ENCODE measurements at regions of chr4 and their contacts with region 1.

Region 1: GRCh38 chr4:119559044-119559647 is 69.5 kb downstream of the PDE5A start:
- DNase-seq: no peak
- H3K4me3 ChIP-seq: no peak overlapping the region
- CTCF ChIP-seq: no peak

Region 2: DNA sequence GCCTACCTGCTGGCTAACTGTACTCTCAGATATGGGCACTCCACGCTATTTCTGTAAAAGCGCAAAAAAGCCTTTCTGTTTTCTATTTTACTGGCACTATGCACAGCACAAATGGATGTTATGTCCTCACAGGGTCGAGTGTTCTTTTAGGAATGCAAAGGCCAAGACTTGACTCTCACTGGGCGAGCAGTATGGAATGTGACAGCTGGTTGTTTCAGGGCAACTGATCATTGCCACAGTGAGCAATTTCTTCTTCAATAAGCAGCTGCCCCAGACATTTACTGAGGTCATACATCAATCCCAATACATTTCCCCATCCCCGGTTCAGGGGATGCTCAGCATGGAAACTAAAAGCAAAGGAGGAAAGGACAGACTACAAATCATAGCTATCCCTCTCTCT is 11.3 kb after region 1 on chr4:
- CTCF ChIA-PET with region 1: interaction called, 13 read pairs
- POLR2A ChIA-PET with region 1: no interaction called
- DNase-seq: peak; percentile 5
- H3K4me3 ChIP-seq: no peak overlapping the region
- CTCF ChIP-seq: no peak

Region 3: GRCh38 chr4:119785963-119786362 is 226.8 kb after region 1 on chr4:
- CTCF ChIA-PET with region 1: interaction called, 10 read pairs
- POLR2A ChIA-PET with region 1: no interaction called
- DNase-seq: no peak
- H3K4me3 ChIP-seq: no peak overlapping the region
- CTCF ChIP-seq: peak; percentile 16

Region 4: DNA sequence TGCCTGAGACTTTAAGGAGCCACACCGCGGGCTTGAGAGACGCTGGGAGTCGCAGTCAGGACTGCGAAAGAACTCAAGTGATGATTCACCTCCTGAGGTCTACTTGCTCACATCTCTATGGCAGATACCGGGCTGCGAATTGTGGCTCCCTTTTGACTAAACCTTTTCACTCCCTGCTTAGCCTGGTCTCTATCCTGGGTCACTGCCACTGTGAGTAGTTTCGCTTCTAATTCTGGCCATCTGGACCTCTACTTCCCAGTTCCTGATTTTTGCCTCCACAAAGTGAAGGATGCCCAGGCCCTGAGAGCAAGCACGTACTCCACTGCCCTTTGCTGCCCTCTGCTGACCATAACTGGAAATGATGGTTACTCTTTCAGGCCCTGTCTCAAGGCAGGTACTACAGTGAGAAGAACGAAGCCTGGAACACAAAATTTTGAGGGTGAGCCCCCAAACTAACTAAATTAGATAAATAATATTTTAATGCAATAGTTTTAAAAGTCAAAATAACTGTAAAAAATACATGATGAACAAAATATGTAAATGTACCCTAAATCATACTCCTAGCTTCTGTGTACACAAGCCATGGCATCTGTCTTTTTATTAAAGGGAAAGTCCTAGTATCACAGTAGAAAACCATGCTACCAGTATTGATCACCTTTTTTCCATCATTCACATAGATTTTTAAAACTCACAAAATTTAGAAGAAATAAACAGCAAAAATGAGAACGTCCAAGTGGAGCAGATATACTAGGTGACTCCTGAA is 490.8 kb after region 1 on chr4:
- CTCF ChIA-PET with region 1: interaction called, 98 read pairs
- POLR2A ChIA-PET with region 1: no interaction called
- DNase-seq: no peak
- H3K4me3 ChIP-seq: peak overlapping the region; percentile 52
- CTCF ChIP-seq: peak; percentile 86

Region 5: DNA sequence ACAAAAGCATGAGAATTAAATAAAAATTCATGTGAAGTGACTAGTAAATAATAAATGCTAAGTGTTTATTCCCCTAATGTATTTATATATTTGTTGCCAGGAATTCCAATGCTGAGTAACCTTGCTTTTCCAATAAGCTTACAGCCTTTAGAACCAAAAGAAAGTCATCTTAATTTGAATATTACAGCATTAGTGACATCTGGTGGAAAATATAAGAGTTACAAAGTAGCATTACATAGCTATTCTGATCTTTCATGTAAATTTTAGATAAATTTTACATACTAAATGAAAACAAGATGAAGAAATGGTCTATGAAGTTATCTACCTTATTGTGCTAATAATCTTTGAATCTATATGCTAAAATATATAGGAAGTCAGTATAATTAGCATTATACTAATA is 497.1 kb after region 1 on chr4:
- CTCF ChIA-PET with region 1: interaction called, 98 read pairs
- POLR2A ChIA-PET with region 1: no interaction called
- DNase-seq: no peak
- H3K4me3 ChIP-seq: no peak overlapping the region
- CTCF ChIP-seq: peak; percentile 10

Region 6: GRCh38 chr4:120062663-120063195 is 503.6 kb after region 1 on chr4:
- CTCF ChIA-PET with region 1: interaction called, 98 read pairs
- POLR2A ChIA-PET with region 1: no interaction called
- DNase-seq: no peak
- H3K4me3 ChIP-seq: no peak overlapping the region
- CTCF ChIP-seq: no peak

Measured in AG04449 (cell line).